Activated T-helper 1 cell treated with anti-CD3 and anti-CD28 coated beads, Interleukin-12 subunit alpha, Interleukin-12 subunit beta, Interleukin-2, Interleukin-4 antibody, amounts not matched to agents 30 ng/mL and 10 ng/mL and 1 ng/mL, durations not matched to agents 14 hours and 24 hours and 36 hours (primary cell): ENCODE measurements at regions of chr1 and their contacts with region 1.

Region 1: GRCh38 chr1:172662464-172663109 is 3.7 kb downstream of the FASLG start:
- DNase-seq: peak; percentile 79
- H3K4me3 Mint-ChIP-seq: peak overlapping the region; percentile 96
- H3K27ac Mint-ChIP-seq: peak overlapping the region; percentile 89
- H3K4me1 Mint-ChIP-seq: peaks cover 81% of the 10 kb centered on the region
- H3K27me3 Mint-ChIP-seq: no peaks in the 10 kb centered on the region

Region 2: DNA sequence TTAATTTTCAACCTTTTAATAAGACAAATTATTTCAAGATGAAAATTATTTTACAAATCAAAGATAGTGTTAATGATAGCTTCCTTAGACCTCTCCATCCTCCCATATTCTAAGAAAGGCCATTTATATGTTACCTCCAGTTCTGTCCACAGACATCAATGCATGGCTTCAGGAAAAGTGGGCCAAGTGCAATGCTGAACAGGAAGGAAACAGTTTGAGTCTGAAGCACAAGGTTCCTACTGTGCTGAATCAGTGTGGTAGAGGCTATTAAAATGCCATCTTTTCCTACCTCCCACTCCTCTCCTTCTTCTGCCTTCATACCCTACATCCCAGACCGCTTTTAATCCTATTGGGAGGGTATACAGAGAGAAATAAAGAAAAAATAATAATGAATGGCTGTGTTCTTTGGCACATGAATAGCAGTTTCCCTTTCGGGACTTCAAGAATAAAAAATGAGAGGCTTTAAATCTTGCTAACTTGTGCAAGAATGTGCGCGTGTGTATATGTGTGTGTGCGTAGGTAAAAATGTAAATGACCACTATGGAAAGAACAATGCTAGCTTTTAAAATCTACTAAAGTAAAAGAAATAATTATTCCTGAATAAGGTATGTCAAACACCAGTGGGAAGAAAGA is 304.7 kb before region 1 on chr1:
- intact Hi-C with region 1: loop called (anchors 2 kb)
- DNase-seq: no peak
- H3K4me3 Mint-ChIP-seq: peak overlapping the region; percentile 6
- H3K27ac Mint-ChIP-seq: peak overlapping the region; percentile 83
- H3K4me1 Mint-ChIP-seq: peaks cover 56% of the 10 kb centered on the region
- H3K27me3 Mint-ChIP-seq: no peaks in the 10 kb centered on the region

Region 3: GRCh38 chr1:172398970-172399755 is 263.4 kb before region 1 on chr1:
- intact Hi-C with region 1: no loop called
- DNase-seq: no peak
- H3K4me3 Mint-ChIP-seq: no peak overlapping the region
- H3K27ac Mint-ChIP-seq: peak overlapping the region; percentile 4
- H3K4me1 Mint-ChIP-seq: peaks cover 52% of the 10 kb centered on the region
- H3K27me3 Mint-ChIP-seq: no peaks in the 10 kb centered on the region

Region 4: GRCh38 chr1:172609528-172609927 is 53.1 kb before region 1 on chr1:
- intact Hi-C with region 1: loop called (anchors 1 kb)
- DNase-seq: no peak
- H3K4me3 Mint-ChIP-seq: no peak overlapping the region
- H3K27ac Mint-ChIP-seq: no peak overlapping the region
- H3K4me1 Mint-ChIP-seq: peaks cover 24% of the 10 kb centered on the region
- H3K27me3 Mint-ChIP-seq: no peaks in the 10 kb centered on the region

Region 5: DNA sequence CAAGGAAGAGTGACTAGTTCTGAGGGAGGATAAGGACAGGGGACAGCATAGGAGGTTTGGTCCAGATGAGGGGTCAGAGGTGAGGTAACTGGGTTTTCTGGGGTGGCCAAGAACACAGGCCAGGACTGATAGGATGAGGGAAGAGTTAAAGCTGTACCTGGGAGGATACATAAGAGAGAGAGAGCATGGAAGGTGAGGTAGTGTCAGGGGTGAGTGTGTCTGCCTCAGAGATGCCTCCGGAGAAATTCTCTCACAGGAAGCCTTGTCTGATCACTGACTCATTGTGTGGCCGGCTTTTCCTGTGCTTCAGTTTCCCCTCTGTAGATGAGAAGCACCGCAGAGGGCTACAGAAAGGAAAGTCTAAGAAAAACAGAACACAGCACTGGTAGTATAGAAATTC is 36.5 kb after region 1 on chr1:
- intact Hi-C with region 1: loop called (anchors 1 kb)
- DNase-seq: peak; percentile 72
- H3K4me3 Mint-ChIP-seq: peak overlapping the region; percentile 62
- H3K27ac Mint-ChIP-seq: peak overlapping the region; percentile 88
- H3K4me1 Mint-ChIP-seq: no peaks in the 10 kb centered on the region
- H3K27me3 Mint-ChIP-seq: no peaks in the 10 kb centered on the region

Region 6: GRCh38 chr1:172837816-172838680 is 175.5 kb after region 1 on chr1:
- intact Hi-C with region 1: loop called (anchors 1 kb)
- DNase-seq: peak; percentile 29
- H3K4me3 Mint-ChIP-seq: no peak overlapping the region
- H3K27ac Mint-ChIP-seq: peak overlapping the region; percentile 26
- H3K4me1 Mint-ChIP-seq: peaks cover 46% of the 10 kb centered on the region
- H3K27me3 Mint-ChIP-seq: peaks cover 65% of the 10 kb centered on the region